Activated naive CD4-positive, alpha-beta T cell treated with anti-CD3 and anti-CD28 coated beads for 36 hours (primary cell): ENCODE measurements at regions of chr22 and their contacts with region 1.

Region 1: DNA sequence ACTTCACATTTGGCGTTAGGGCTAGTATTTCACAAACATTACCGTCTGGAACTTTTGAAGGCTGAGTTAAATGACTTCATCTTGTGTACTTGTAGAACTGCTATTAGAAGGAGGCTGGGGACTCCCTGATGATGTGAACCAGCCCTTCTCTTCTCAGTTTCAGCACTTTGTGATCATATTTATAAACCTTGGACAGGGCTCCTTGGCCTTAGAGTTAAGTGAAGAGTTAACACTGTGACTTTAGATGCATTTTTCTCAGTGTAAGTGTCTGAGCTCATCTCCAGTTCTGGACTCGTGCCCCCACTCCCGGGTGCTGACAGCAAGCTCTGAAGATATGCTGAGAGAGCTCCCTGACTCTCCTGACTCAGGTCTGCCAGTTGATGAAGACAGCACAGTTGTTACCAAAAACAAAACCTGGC is 8.4 kb downstream of the MIAT start:
- DNase-seq: peak; percentile 12
- H3K4me3 Mint-ChIP-seq: no peak overlapping the region
- H3K27ac Mint-ChIP-seq: peak overlapping the region; percentile 86
- H3K4me1 Mint-ChIP-seq: peaks cover 49% of the 10 kb centered on the region
- H3K27me3 Mint-ChIP-seq: no peaks in the 10 kb centered on the region

Region 2: DNA sequence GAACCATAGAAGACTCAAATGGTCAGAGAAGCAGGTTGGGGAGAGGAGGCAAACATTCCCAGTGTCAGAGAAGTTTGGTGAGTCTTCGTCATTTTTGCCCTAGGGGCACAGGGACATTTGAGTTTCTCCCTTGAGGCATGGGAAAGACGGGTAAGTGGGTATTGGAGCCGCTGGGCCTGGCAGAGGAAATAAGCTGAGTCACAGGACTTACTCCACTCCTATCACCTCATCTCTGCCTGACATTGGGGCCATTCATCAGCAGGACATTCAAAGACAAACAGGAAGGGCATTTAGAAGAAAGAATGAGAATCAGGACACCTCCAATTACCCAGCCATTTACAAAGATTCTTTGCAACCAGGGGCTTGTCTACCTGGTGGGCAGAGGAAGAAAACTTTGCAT is 597.3 kb before region 1 on chr22:
- CTCF ChIA-PET with region 1: no interaction called
- intact Hi-C with region 1: no loop called
- DNase-seq: no peak
- H3K4me3 Mint-ChIP-seq: no peak overlapping the region
- H3K27ac Mint-ChIP-seq: no peak overlapping the region
- H3K4me1 Mint-ChIP-seq: peaks cover 3% of the 10 kb centered on the region
- H3K27me3 Mint-ChIP-seq: peaks cover 6% of the 10 kb centered on the region

Region 3: GRCh38 chr22:26398741-26399153 is 267.1 kb before region 1 on chr22:
- CTCF ChIA-PET with region 1: no interaction called
- intact Hi-C with region 1: loop called (anchors 1 kb)
- DNase-seq: peak; percentile 84
- H3K4me3 Mint-ChIP-seq: no peak overlapping the region
- H3K27ac Mint-ChIP-seq: no peak overlapping the region
- H3K4me1 Mint-ChIP-seq: peaks cover 2% of the 10 kb centered on the region
- H3K27me3 Mint-ChIP-seq: no peaks in the 10 kb centered on the region

Region 4: DNA sequence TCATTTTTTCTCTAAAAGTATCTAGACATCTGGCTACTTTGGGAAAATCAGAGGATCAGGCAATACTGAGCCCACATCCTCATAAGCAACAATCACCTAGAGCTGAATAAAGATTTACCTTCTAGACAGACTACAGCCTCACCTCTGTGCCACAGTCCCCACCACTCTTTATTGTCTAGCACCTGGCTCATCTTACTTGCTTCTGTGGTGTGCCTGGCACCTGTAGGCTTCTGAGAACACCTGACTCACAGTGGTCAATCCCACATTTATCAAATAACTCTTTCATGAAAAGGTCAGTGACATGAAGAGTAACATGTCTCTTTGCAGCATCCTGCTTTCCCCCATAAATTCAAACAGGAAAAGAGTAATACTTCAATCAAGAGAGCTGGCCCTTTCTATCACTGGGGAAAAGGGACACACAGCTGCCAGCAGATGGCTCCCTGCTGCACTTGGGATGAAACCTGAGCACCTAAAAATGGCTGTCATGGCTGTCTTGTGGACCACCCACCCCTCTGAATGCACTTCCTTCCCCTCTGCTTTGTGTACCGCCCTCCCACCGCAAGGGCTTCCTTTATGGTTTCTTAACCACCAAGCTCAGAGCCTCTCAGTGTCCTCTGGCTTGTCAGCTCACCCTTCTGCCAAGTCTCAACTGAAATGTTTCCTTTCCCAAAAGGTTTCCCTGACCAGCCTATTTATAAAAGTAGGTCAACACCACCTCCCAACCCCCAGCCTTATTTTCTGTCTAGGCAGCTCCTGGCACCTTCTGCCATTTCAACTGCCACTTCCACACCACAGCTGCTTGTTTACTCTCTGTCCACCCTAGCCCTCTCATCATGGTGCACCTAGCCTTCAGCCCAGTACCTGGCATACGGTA is 162.9 kb before region 1 on chr22:
- CTCF ChIA-PET with region 1: interaction called, 24 read pairs
- intact Hi-C with region 1: loop called (anchors 1 kb)
- DNase-seq: peak; percentile 72
- H3K4me3 Mint-ChIP-seq: no peak overlapping the region
- H3K27ac Mint-ChIP-seq: peak overlapping the region; percentile 87
- H3K4me1 Mint-ChIP-seq: peaks cover 17% of the 10 kb centered on the region
- H3K27me3 Mint-ChIP-seq: no peaks in the 10 kb centered on the region

Region 5: GRCh38 chr22:26642465-26643417 is 23.1 kb before region 1 on chr22:
- CTCF ChIA-PET with region 1: interaction called, 11 read pairs
- intact Hi-C with region 1: loop called (anchors 1 kb)
- DNase-seq: peak; percentile 96
- H3K4me3 Mint-ChIP-seq: peak overlapping the region; percentile 60
- H3K27ac Mint-ChIP-seq: peak overlapping the region; percentile 95
- H3K4me1 Mint-ChIP-seq: peaks cover 52% of the 10 kb centered on the region
- H3K27me3 Mint-ChIP-seq: peaks cover 8% of the 10 kb centered on the region

Region 6: DNA sequence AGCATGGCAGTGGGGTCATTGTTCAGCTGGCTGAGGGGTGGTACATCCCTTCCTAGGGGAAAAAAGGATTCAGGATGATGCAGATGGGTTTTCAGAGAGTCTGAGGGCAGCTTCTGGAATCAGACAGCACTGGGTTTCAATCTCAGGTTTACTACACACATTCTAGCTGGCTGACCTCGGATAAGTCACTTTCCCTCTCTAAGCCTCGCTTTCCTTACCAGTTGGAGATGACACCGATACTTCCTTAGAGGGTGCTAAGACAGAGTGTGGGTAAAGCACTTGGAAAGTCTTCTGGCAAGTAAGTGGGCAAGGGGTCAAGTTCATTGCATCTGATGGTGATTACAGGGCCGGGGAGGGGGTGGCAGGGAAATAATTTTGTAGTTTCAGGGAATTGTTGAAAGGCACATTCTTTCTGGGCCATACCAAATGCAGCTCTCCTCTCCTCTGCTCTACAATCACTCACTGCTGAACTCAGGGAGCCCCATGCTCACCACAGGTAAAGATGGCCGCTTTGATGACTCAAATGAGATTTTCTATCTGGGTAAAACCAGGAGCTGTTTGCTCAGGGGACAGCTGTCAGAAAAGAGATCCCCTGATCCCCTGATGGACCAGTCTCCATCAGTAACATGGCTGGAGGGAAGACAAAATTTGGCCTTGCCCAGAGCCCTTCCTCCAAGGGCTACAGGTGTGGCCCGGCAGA is 14.9 kb before region 1 on chr22:
- CTCF ChIA-PET with region 1: interaction called, 11 read pairs
- intact Hi-C with region 1: no loop called
- DNase-seq: peak; percentile 47
- H3K4me3 Mint-ChIP-seq: no peak overlapping the region
- H3K27ac Mint-ChIP-seq: no peak overlapping the region
- H3K4me1 Mint-ChIP-seq: peaks cover 28% of the 10 kb centered on the region
- H3K27me3 Mint-ChIP-seq: peaks cover 5% of the 10 kb centered on the region

Region 7: DNA sequence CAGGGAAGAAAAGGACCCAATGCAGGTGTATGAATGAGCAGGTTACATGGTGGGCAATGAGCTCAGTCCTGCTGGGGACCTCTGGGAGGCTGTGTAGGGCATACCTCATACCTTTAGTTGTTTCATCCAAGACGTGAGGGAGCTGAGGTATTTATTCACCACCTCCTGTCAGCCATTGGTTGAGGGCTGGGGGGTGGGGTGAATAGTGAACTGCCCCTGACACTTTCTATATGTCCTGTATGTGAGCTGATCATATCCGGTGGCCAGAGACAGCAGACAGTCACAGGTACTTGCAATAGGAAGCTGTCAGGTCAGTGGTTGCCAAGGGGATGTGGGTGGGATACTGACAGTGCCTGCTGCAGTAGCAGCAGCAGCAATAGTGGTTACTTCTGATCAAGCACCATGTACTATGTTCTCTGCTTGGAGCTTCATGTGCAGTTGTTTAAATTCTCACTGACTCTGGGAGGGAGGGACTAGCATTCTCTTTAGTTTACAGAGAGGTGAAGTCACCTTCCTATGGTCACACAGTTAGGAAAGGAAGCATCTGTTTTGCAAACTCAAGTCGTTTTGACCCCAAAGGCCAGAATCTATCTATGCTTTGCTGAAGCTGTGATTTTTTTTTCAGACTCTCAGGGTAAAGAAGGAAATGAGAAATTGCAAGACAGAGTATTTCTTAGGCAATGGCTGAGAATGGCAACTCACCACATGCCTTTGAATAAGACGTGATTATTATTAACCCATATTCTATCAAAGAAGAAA is 45.6 kb after region 1 on chr22:
- CTCF ChIA-PET with region 1: no interaction called
- intact Hi-C with region 1: no loop called
- DNase-seq: no peak
- H3K4me3 Mint-ChIP-seq: no peak overlapping the region
- H3K27ac Mint-ChIP-seq: no peak overlapping the region
- H3K4me1 Mint-ChIP-seq: peaks cover 13% of the 10 kb centered on the region
- H3K27me3 Mint-ChIP-seq: no peaks in the 10 kb centered on the region